CD4-positive, alpha-beta memory T cell (primary cell): ENCODE measurements at regions of chr18 and their contacts with region 1.

Region 1: GRCh38 chr18:35343936-35344735 is at the start of gene ZNF24:
- DNase-seq: peak; percentile 89 to 95 (median 89)
- H3K4me3 ChIP-seq: peak within 1 kb of the TSS; percentile 87 to 96
- H3K4me3 Mint-ChIP-seq: peak within 1 kb of the TSS; percentile 94 to 99 (median 98)
- H3K27ac ChIP-seq: peak within 1 kb of the TSS; percentile 99
- H3K27ac Mint-ChIP-seq: peak within 1 kb of the TSS; percentile 96 to 99 (median 98)
- H3K4me1 ChIP-seq: peaks cover 45% of the 10 kb centered on the region
- H3K4me1 Mint-ChIP-seq: peaks cover 32 to 58% (median 44%) of the 10 kb centered on the region in 4 donors
- H3K27me3 ChIP-seq: no peaks in the 10 kb centered on the region
- H3K27me3 Mint-ChIP-seq: no peaks in the 10 kb centered on the region
- total RNA-seq, gene ZNF24: 89.1 to 90.5 TPM

Region 2: GRCh38 chr18:35231052-35231451 is 113.1 kb before region 1 on chr18:
- CTCF ChIA-PET with region 1: interaction called, 11 read pairs
- POLR2A ChIA-PET with region 1: interaction called, 5 read pairs
- intact Hi-C with region 1: no loop called
- DNase-seq: peak; percentile 72 to 79 (median 78)
- H3K4me3 ChIP-seq: no peak overlapping the region
- H3K4me3 Mint-ChIP-seq: peak overlapping the region in 7 of 8 donors; percentile 21 to 76 (median 51)
- H3K27ac ChIP-seq: no peak overlapping the region
- H3K27ac Mint-ChIP-seq: peak overlapping the region in 1 of 7 donors; percentile 50
- H3K4me1 ChIP-seq: no peaks in the 10 kb centered on the region
- H3K4me1 Mint-ChIP-seq: peaks cover 3 to 4% (median 3%) of the 10 kb centered on the region in 4 donors
- H3K27me3 ChIP-seq: no peaks in the 10 kb centered on the region
- H3K27me3 Mint-ChIP-seq: no peaks in the 10 kb centered on the region

Region 3: DNA sequence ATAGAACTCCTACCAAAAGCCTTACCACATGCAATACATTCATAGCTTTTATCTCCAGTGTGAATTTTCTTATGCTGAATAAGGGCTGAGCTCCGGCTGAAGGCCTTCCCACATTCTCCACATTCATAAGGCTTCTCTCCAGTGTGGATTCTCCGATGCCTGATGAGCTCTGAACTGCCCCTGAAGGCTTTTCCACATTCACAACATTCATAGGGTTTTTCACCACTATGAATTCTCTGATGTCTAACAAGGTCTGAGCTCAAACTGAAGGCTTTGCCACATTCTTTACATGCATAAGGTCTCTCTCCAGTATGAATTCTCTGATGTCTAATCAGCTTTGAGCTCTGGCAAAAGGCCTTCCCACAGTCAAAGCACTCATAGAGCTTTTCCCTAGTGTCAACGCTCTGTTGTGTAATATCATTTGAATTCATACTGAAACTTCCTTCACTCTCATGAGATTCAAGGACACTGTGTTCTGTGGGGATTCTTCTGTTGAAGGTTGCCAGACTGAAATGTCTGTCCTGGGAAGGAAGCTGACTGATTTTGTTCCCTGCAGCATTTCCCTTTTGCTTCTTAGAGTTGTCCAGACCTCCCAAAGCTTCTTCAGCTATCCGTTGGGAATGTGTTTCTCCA is 90.4 kb before region 1 on chr18:
- CTCF ChIA-PET with region 1: no interaction called
- POLR2A ChIA-PET with region 1: no interaction called
- intact Hi-C with region 1: no loop called
- DNase-seq: no peak
- H3K4me3 ChIP-seq: no peak overlapping the region
- H3K4me3 Mint-ChIP-seq: no peak overlapping the region
- H3K27ac ChIP-seq: no peak overlapping the region
- H3K27ac Mint-ChIP-seq: peak overlapping the region in 1 of 7 donors; percentile 22
- H3K4me1 ChIP-seq: no peaks in the 10 kb centered on the region
- H3K4me1 Mint-ChIP-seq: no peaks in the 10 kb centered on the region
- H3K27me3 ChIP-seq: no peaks in the 10 kb centered on the region
- H3K27me3 Mint-ChIP-seq: no peaks in the 10 kb centered on the region

Region 4: GRCh38 chr18:35267161-35267651 is 76.9 kb before region 1 on chr18:
- CTCF ChIA-PET with region 1: no interaction called
- POLR2A ChIA-PET with region 1: interaction called, 25 read pairs
- intact Hi-C with region 1: loop called (anchors 1 kb)
- DNase-seq: peak; percentile 49 to 69 (median 51)
- H3K4me3 ChIP-seq: peak overlapping the region; percentile 23 to 78
- H3K4me3 Mint-ChIP-seq: peak overlapping the region; percentile 93 to 99 (median 96)
- H3K27ac ChIP-seq: peak overlapping the region; percentile 62
- H3K27ac Mint-ChIP-seq: peak overlapping the region; percentile 83 to 98 (median 96)
- H3K4me1 ChIP-seq: peaks cover 10% of the 10 kb centered on the region
- H3K4me1 Mint-ChIP-seq: peaks cover 17 to 30% (median 25%) of the 10 kb centered on the region in 4 donors
- H3K27me3 ChIP-seq: no peaks in the 10 kb centered on the region
- H3K27me3 Mint-ChIP-seq: no peaks in the 10 kb centered on the region

Region 5: DNA sequence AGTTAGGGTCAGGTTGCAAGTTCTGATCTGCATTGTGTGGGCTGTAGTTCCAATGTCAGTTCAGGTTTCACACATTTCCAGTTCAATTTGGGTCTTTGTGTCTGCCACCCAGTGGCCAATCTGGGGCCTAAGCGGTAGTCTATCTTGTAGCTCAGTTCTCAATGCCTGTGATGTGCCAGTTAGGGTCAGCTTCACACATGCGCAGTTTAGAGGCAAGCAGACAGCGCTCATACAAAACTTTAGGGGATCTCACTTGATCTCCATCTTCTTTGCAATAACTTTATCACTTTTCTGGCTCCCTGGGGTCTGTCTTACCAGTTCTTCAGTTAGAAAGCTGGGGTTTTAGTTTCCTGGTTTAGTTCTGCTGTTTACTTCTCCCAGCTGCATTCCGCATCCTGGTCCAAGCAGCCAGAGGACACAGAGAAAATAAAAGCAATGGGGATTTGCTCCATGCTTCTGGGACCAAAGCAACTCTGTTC is 11.0 kb after region 1 on chr18:
- CTCF ChIA-PET with region 1: interaction called, 11 read pairs
- POLR2A ChIA-PET with region 1: interaction called, 7 read pairs
- intact Hi-C with region 1: loop called (anchors 1 kb)
- DNase-seq: peak; percentile 54 to 63 (median 60)
- H3K4me3 ChIP-seq: no peak overlapping the region
- H3K4me3 Mint-ChIP-seq: no peak overlapping the region
- H3K27ac ChIP-seq: no peak overlapping the region
- H3K27ac Mint-ChIP-seq: peak overlapping the region in 1 of 7 donors; percentile 19
- H3K4me1 ChIP-seq: no peaks in the 10 kb centered on the region
- H3K4me1 Mint-ChIP-seq: peaks cover 0 to 2% (median 0%) of the 10 kb centered on the region in 4 donors
- H3K27me3 ChIP-seq: no peaks in the 10 kb centered on the region
- H3K27me3 Mint-ChIP-seq: peaks cover 0 to 2% of the 10 kb centered on the region in 2 donors

Region 6: GRCh38 chr18:36067055-36067957 is 723.2 kb after region 1 on chr18 and contains the start of gene RPRD1A:
- CTCF ChIA-PET with region 1: no interaction called
- POLR2A ChIA-PET with region 1: no interaction called
- intact Hi-C with region 1: loop called (anchors 1 kb)
- DNase-seq: peak; percentile 94 to 97 (median 94)
- H3K4me3 ChIP-seq: peak within 1 kb of the TSS; percentile 81 to 87
- H3K4me3 Mint-ChIP-seq: peak within 1 kb of the TSS; percentile 92 to 98 (median 95)
- H3K27ac ChIP-seq: peak within 1 kb of the TSS; percentile 74
- H3K27ac Mint-ChIP-seq: peak within 1 kb of the TSS; percentile 89 to 98 (median 96)
- H3K4me1 ChIP-seq: peaks cover 32% of the 10 kb centered on the region
- H3K4me1 Mint-ChIP-seq: peaks cover 31 to 48% (median 40%) of the 10 kb centered on the region in 4 donors
- H3K27me3 ChIP-seq: no peaks in the 10 kb centered on the region
- H3K27me3 Mint-ChIP-seq: peaks cover 0 to 1% of the 10 kb centered on the region in 2 donors
- total RNA-seq, gene RPRD1A: 40.1 to 42.3 TPM